Activated T-helper 1 cell treated with anti-CD3 and anti-CD28 coated beads, Interleukin-12 subunit alpha, Interleukin-12 subunit beta, Interleukin-2, Interleukin-4 antibody, amounts not matched to agents 30 ng/mL and 10 ng/mL and 1 ng/mL, durations not matched to agents 14 hours and 24 hours and 36 hours (primary cell): ENCODE measurements at regions of chr6 and their contacts with region 1.

Region 1: DNA sequence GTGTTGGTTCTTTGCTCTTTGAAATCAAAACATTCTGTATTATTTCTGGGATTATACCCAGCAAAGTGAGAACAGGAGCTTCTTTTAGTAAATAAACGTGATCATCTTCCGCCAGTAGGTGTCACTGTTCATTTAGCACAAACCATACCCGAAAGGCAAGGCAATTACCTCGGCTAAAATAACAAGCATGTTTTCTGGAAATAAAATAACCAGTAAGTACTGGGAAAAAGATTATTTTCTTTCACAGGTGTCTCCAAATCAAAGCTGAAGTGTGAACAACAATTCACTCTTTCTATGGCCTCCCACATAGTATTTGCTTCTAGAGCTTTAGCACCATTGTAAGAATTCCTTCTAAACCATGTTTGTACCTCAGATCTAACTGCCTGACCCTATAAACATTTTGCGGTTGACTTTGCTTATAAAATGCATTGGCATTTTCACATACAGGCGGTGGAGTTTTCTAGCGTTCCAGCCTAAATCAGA is 144.6 kb upstream of the AGPAT4 start:
- DNase-seq: no peak
- H3K4me3 Mint-ChIP-seq: no peak overlapping the region
- H3K27ac Mint-ChIP-seq: no peak overlapping the region
- H3K4me1 Mint-ChIP-seq: no peaks in the 10 kb centered on the region
- H3K27me3 Mint-ChIP-seq: peaks cover 5% of the 10 kb centered on the region

Region 2: DNA sequence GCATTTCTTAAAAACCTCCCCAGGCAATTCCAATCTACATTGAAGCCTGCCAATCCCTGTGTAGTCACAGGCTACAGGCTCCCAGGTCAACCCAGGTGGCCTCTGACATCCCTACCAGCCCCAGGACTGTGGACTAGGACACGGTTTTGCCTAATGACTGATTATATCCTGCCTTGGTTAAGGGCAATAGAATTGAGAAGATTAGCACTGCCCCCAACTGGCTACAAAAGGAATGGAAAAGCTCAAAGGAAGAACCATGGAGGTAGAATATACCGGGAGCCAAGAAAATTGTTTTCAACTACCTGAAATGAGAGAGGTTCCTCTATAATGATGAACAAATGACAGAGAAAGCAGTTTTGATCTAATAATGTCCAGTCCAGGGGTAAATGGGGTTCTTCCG is 276.5 kb after region 1 on chr6:
- intact Hi-C with region 1: loop called (anchors 1 kb)
- DNase-seq: no peak
- H3K4me3 Mint-ChIP-seq: no peak overlapping the region
- H3K27ac Mint-ChIP-seq: no peak overlapping the region
- H3K4me1 Mint-ChIP-seq: no peaks in the 10 kb centered on the region
- H3K27me3 Mint-ChIP-seq: peaks cover 3% of the 10 kb centered on the region